IMR-90 (cell line): ENCODE measurements at regions of chr7 and their contacts with region 1.

Region 1: DNA sequence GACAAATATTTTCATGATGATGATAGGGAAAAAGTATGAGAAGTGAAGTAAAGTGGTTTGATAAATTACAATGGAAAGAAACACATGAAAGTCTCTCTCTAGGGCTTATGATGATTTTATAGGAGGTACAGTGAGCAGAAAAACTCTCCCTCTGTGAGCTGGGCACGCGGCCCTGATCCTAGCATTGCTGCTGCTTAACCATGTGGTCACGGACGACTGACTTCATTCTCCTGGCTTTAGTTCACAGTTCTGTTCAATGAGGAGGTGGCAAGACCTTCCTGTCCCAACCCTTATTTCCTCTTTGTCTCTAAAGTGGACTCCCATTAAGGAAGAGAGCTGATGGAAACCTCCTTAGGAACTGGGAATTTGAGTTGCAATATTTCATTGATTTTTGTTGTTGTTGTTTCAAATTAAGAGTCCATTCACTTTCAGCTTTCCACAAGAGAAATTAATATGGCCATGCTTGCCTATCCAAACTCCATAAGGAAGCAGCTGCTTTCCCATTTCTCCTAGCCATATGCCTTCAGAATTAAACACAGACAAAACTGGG is 8.2 kb upstream of the PON3 start:
- DNase-seq: peak; percentile 1
- ATAC-seq: no peak
- H3K4me3 ChIP-seq: no peak overlapping the region
- H3K27ac ChIP-seq: no peak overlapping the region
- H3K4me1 ChIP-seq: no peaks in the 10 kb centered on the region
- H3K27me3 ChIP-seq: no peaks in the 10 kb centered on the region
- CTCF ChIP-seq: no peak
- POLR2A ChIP-seq: no peak
- RAD21 ChIP-seq: no peak

Region 2: DNA sequence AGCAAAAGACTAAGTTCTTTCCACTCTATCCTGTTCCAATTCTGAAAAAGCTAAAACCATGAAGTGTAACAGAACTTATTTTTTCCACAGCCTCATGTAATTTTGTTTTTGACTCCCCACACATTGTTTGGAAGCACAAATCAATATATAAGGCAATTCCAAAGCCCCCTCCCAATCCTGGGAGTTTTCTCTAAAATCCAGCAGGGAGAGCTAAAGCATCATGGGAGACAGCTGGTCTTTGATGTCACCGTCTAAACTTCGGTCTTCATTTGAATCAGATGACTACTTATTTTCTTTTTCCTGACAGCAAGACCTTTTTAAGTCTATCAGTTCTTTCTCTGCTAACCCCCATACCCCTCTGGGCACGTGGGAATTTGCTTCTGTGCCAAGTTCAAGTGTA is 46.8 kb before region 1 on chr7:
- CTCF ChIA-PET with region 1: no interaction called
- POLR2A ChIA-PET with region 1: no interaction called
- dilution Hi-C with region 1: no loop called
- in situ Hi-C with region 1: no loop called
- intact Hi-C with region 1: loop called (anchors 5 kb)
- DNase-seq: no peak
- ATAC-seq: no peak
- H3K4me3 ChIP-seq: no peak overlapping the region
- H3K27ac ChIP-seq: no peak overlapping the region
- H3K4me1 ChIP-seq: no peaks in the 10 kb centered on the region
- H3K27me3 ChIP-seq: no peaks in the 10 kb centered on the region
- CTCF ChIP-seq: 0 out of 2 replicates have a peak, but pooled peaks have one; percentile 27
- POLR2A ChIP-seq: no peak
- RAD21 ChIP-seq: peak; percentile 15; the same call in 1 of the 2 replicates

Region 3: DNA sequence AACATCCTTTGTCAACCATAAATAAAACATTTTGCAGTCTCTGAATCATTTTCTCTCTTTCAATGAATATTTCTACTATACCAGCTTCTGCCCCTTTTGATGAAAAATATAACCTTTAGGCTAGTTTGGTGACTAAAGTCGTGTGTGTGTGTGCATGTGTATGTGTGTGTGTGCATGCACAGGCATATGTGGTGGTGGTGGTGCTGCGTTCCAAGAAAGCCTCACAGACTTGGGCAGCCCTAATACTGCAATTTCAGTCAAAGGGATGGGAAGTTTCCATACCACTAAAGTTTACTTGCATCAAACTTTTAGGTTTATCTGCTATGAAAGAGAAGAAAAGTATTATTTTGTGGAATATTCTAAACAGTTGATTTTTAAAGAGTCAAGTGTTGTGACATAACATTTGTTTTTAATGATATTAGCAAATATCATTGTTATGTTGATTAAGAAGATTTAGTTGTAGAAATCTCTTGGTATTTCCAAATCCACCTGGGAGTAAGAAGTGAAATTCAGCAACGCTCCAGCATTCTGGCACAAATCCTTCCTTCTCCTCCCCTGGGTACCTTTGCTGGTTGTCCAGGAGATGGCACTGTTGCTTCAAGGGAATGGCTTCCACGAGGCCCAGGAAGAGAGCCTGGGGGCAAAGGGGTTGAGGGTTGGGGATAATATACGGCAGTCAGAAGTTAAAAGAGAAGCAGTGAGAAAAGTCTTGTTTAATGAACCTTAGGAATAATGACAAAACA is 122.8 kb after region 1 on chr7:
- CTCF ChIA-PET with region 1: no interaction called
- POLR2A ChIA-PET with region 1: no interaction called
- dilution Hi-C with region 1: no loop called
- in situ Hi-C with region 1: no loop called
- intact Hi-C with region 1: no loop called
- DNase-seq: peak; percentile 44
- ATAC-seq: peak; percentile 91
- H3K4me3 ChIP-seq: no peak overlapping the region
- H3K27ac ChIP-seq: no peak overlapping the region
- H3K4me1 ChIP-seq: no peaks in the 10 kb centered on the region
- H3K27me3 ChIP-seq: peaks cover 11% of the 10 kb centered on the region
- CTCF ChIP-seq: peak; percentile 86
- POLR2A ChIP-seq: no peak
- RAD21 ChIP-seq: peak; percentile 80